ENCODE measurements at regions of chr5 and their contacts with region 1.

Region 1: GRCh38 chr5:73215891-73216610 is 43.1 kb downstream of the TMEM174 start:
- DNase-seq: no peak

Region 2: GRCh38 chr5:72788866-72789505 is 427.1 kb before region 1 on chr5:
- intact Hi-C with region 1: no loop called
- DNase-seq: no peak

Region 3: GRCh38 chr5:73201547-73202513 is 14.2 kb before region 1 on chr5:
- intact Hi-C with region 1: no loop called
- DNase-seq: peak; percentile 85

Region 4: GRCh38 chr5:73454351-73455036 is 238.4 kb after region 1 on chr5:
- intact Hi-C with region 1: loop called (anchors 5 kb)
- DNase-seq: no peak

Measured in cardiac septum (tissue), 1 donor.